HEK293 (cell line): ENCODE measurements at regions of chr10 and their contacts with region 1.

Region 1: GRCh38 chr10:24488631-24489030 is 235.1 kb downstream of the ARHGAP21 start:
- H3K4me3 ChIP-seq: no peak overlapping the region
- H3K27ac ChIP-seq: no peak overlapping the region
- H3K4me1 ChIP-seq: 0 out of 2 replicates have a peak, but pooled peaks cover under 1% of the 10 kb centered on the region
- CTCF ChIP-seq: no peak

Region 2: GRCh38 chr10:24415455-24416125 is 73.0 kb before region 1 on chr10:
- CTCF ChIA-PET with region 1: interaction called, 10 read pairs
- POLR2A ChIA-PET with region 1: no interaction called
- H3K4me3 ChIP-seq: no peak overlapping the region
- H3K27ac ChIP-seq: no peak overlapping the region; the same call in 1 of the 2 replicates
- H3K4me1 ChIP-seq: peaks cover 4% of the 10 kb centered on the region
- CTCF ChIP-seq: no peak

Region 3: DNA sequence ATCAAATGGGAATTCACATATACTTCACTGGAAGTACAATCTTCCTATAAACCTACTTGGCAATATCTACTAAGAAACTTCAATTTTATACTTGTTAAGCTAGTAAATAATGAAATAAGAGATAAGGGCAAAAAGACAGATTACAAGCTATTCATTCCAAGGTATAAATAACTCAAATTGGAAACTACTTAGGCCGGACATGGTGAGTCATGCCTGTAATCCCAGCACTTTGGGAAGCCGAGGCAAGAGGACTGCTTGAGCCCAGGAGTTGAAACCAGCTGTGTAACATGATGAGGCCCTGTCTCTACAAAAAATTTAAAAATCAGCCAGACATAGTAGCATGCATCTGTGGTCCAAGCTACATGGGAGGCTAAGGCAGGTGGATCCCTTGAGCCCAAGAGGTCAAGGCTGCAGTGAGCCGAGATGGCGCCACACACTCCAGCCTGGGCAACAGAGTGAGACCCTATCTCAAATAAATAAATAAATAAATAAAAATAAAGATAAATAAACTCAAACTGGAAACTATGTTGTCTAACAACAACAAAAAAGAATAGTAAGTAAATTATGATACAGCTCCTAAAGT is 197.4 kb after region 1 on chr10:
- CTCF ChIA-PET with region 1: no interaction called
- POLR2A ChIA-PET with region 1: no interaction called
- H3K4me3 ChIP-seq: no peak overlapping the region
- H3K27ac ChIP-seq: no peak overlapping the region
- H3K4me1 ChIP-seq: peaks cover 5% of the 10 kb centered on the region
- CTCF ChIP-seq: no peak